Left cardiac atrium (tissue), 4 donors: ENCODE measurements at regions of chr21 and their contacts with region 1.

Region 1: DNA sequence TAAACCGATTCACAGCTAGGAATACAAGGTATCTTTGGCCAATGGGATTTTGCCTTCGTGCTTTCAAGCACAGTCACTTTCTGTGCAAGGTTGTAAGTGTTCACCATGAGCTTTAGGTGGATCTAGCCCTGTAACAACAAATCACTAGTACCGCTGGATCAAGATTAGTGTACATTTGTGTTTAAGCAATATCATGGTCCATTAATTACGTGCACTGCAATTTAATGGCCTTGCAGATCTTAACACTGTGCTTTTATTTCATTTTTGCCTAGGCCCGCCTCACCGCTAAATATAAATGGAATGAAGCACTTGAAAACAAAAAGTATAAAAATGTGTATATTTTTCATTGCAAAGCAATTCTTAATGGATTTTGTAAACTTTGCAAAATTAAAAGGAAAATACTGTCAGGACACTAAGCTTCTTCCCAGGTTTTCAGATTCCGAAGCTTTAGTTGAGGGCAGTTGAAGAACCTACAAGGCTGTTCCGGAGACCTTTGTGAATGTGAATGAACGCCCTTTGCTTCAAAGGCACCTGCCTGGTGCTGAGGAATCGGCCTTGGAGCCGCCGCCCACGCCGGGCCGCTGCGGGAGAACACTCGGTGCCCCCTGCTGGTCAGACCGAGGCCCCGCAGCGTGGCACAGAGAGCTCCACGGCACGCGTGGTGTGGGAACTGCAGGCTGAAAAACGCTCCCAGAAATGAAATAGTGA is 460.9 kb downstream of the DSCAM start:
- DNase-seq: peak; percentile 64
- ATAC-seq: peak; percentile 47 to 87

Region 2: DNA sequence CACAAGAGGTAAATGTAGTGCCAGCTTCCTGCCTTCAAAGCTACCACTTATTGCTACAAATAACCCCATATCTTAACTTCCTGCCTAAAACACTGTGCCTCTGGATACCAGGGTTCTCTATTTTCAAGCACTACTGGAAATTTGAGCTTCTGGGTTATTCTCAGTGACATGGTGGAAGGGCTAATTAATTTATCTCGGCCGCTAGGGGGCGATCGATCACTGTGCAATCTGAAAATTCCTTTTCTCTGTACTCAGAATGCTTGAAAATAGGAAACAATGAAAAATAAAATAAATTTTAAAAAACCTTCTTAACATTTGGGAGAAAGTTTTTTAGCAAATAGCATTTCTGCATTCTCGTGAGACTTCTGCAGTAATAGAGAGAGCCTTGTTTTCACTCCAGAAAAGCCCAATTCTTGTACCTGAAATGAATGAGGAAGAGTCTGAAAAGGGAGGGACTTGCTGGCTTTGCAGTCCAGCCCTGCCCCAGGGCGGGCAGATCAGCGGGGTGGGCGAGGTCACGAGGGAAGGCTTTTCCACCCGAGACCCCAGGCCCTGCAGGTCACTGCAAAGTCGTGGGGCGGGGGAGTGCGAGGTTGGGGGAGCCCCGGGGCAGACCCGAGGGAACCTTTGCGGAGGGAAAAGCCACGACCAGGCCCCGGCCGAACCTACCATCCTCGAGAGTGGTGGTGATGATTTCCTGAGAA is 242.1 kb before region 1 on chr21:
- intact Hi-C with region 1: loop called in 1 of 2 experiments (anchors 2 kb)
- DNase-seq: peak; percentile 38
- ATAC-seq: peak in 1 of 2 donors; percentile 49

Region 3: GRCh38 chr21:40158366-40158765 is 227.7 kb before region 1 on chr21:
- intact Hi-C with region 1: loop called in 1 of 2 experiments (anchors 10 kb)
- DNase-seq: no peak
- ATAC-seq: no peak